ENCODE measurements at regions of chr6 and their contacts with region 1.

Region 1: GRCh38 chr6:137910424-137910834 is 43.4 kb downstream of the TNFAIP3 start:
- DNase-seq: no peak
- ATAC-seq: no peak
- H3K4me3 Mint-ChIP-seq: no peak overlapping the region
- H3K27ac Mint-ChIP-seq: no peak overlapping the region
- H3K4me1 Mint-ChIP-seq: peaks cover 45% of the 10 kb centered on the region
- H3K27me3 Mint-ChIP-seq: no peaks in the 10 kb centered on the region

Region 2: GRCh38 chr6:137927777-137928218 is 17.4 kb after region 1 on chr6:
- CTCF ChIA-PET with region 1: interaction called, 11 read pairs
- POLR2A ChIA-PET with region 1: interaction called, 5 read pairs
- DNase-seq: peak; percentile 87
- ATAC-seq: peak; percentile 99
- H3K4me3 Mint-ChIP-seq: peak overlapping the region; percentile 52
- H3K27ac Mint-ChIP-seq: peak overlapping the region; percentile 69
- H3K4me1 Mint-ChIP-seq: peaks cover 45% of the 10 kb centered on the region
- H3K27me3 Mint-ChIP-seq: no peaks in the 10 kb centered on the region

Measured in activated CD8-positive, alpha-beta T cell treated with anti-CD3 and anti-CD28 coated beads, Interleukin-2, amount 10 ng/mL, durations not matched to agents 7 days and 5 days (primary cell).